ENCODE measurements at regions of chr3 and their contacts with region 1.

Region 1: DNA sequence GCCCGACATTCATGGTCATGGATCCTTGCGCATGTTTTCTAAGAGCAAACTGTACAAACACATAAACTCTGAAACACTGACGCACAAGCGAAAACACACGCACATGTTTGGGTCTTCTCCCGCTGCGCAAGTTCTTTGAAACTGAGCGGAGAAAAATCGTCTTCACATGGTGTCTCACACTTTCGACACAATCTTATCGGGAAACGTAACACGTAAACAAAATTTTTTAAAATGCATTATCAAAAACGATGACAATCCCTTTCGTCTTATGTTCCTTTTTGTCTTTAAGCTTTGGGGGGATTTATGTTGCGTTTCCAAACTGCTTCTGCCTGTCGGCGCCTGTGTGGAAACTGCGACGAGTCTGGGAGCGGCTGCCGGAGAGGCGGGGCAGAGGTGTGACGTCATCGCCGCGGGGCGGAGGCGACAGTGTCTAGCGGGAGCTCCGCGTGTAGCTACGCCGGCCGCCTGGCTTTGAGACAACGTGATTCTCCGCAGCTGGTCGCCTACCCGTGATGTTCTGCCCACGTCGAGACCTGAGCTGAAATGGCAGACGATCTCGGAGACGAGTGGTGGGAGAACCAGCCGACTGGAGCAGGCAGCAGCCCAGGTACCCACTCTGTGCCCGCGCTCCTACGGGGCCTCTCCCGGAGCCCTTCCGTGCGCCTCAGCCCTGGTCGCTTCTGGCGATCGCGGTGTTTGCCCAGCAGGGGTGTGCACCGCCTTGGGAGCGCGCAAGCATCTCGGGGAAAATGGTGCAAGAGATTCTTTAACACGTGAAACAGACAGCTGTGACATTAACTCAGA is at the start of gene CMSS1:
- DNase-seq: peak; percentile 89 to 97 (median 94)
- H3K4me3 ChIP-seq: peak within 1 kb of the TSS; percentile 54 to 98 (median 87)
- H3K27ac ChIP-seq: peak within 1 kb of the TSS in 58 of 59 donors; percentile 14 to 95 (median 87)
- H3K27me3 ChIP-seq: no peaks in the 10 kb centered on the region
- CTCF ChIP-seq: peak in 29 of 56 donors; percentile 6 to 54 (median 28)
- total RNA-seq, gene CMSS1: 13.7 to 69.0 (median 39.0) TPM

Region 2: DNA sequence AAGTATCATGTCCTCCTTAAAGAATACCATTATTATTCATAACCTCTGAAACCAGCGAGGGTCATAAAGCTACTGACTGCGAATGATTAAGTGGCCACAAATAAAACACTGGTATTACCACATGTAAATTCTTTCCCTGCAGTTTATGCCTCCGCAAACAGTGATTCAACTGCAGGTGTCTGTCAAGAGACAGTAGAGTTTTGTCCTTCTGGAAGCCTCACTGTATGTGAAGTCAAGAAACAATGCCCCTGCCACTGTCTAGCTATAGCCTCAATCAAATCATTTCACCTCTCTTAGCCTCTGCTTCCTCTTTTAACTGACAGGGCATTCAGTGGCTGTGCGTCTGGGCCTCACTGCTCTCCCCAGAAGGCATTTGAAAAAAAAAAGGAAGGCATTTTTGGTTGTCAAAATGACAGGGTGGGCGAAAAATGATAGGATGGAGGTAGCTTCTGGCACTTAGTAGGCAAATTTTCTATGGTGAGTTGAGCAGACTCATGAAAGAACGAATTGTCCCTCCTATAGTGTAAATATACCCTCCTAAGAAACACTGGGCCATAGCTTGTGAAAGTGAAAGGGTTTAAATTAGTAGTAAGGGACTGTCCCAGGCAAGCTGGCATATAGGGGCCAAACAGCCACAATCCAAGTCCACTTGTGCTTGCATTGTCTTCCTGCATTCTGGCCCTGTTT is 230.0 kb after region 1 on chr3:
- intact Hi-C with region 1: no loop called
- DNase-seq: no peak
- H3K4me3 ChIP-seq: no peak overlapping the region
- H3K27ac ChIP-seq: peak overlapping the region in 22 of 59 donors; percentile 2 to 68 (median 20)
- H3K27me3 ChIP-seq: no peaks in the 10 kb centered on the region
- CTCF ChIP-seq: no peak

Region 3: GRCh38 chr3:100400780-100401673 is 583.4 kb after region 1 on chr3 and contains the starts of genes LNP1 and TOMM70:
- intact Hi-C with region 1: loop called in 1 of 2 experiments (anchors 10 kb)
- DNase-seq: peak; percentile 94 to 99 (median 98)
- H3K4me3 ChIP-seq: peak within 1 kb of the TSS; percentile 78 to 100 (median 94)
- H3K27ac ChIP-seq: peak within 1 kb of the TSS; percentile 7 to 95 (median 87)
- H3K27me3 ChIP-seq: no peaks in the 10 kb centered on the region
- CTCF ChIP-seq: peak in 14 of 56 donors; percentile 0 to 49 (median 20)
- total RNA-seq, gene LNP1: 4.3 to 16.9 (median 9.5) TPM
- total RNA-seq, gene TOMM70: 24.6 to 81.5 (median 58.4) TPM